ENCODE measurements at regions of chr3 and their contacts with region 1.

Region 1: GRCh38 chr3:172557221-172558220 is 34.3 kb upstream of the TNFSF10 start:
- DNase-seq: no peak
- H3K4me3 ChIP-seq: no peak overlapping the region
- H3K27ac ChIP-seq: peak overlapping the region; percentile 52 to 63
- H3K4me1 ChIP-seq: peaks cover 0 to 11% of the 10 kb centered on the region in 2 donors
- H3K27me3 ChIP-seq: no peaks in the 10 kb centered on the region
- CTCF ChIP-seq: no peak

Region 2: DNA sequence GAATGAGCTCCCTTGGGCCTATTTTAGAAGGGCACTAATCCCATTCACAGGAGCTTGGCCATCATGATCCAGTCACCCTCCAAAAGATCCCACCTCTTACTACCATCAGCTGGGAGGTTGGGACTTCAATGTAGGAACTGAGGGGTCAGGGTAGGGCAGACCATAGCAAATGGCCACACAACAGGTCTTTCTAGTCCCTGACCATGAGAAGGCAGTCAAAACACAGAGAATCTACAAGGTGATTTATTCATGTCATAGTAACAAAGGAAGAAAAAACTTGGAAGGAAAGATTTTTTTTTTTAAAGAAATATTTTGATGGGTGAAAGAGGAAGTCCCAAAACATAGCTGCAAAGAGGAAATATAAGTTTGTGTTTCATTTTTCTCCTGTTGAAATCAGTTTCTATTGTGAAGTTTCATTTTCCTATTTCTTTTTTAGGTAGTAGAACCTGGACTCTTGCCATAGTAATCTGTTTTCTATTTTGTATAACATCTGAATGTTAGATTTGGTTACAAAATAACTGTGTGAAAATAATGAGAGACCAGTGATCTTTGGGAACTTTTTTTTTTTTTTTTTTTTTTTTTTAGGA is 10.8 kb before region 1 on chr3:
- intact Hi-C with region 1: loop called (anchors 2 kb)
- DNase-seq: no peak
- H3K4me3 ChIP-seq: no peak overlapping the region
- H3K27ac ChIP-seq: peak overlapping the region in 1 of 2 donors; percentile 25
- H3K4me1 ChIP-seq: peaks cover 0 to 10% of the 10 kb centered on the region in 2 donors
- H3K27me3 ChIP-seq: no peaks in the 10 kb centered on the region
- CTCF ChIP-seq: no peak

Region 3: GRCh38 chr3:173078525-173078924 is 521.0 kb after region 1 on chr3:
- intact Hi-C with region 1: no loop called
- DNase-seq: no peak
- H3K4me3 ChIP-seq: no peak overlapping the region
- H3K27ac ChIP-seq: no peak overlapping the region
- H3K4me1 ChIP-seq: no peaks in the 10 kb centered on the region
- H3K27me3 ChIP-seq: no peaks in the 10 kb centered on the region
- CTCF ChIP-seq: no peak

Measured in ascending aorta (tissue), 2 donors.